OCI-LY7 (cell line): ENCODE measurements at regions of chr1 and their contacts with region 1.

Region 1: DNA sequence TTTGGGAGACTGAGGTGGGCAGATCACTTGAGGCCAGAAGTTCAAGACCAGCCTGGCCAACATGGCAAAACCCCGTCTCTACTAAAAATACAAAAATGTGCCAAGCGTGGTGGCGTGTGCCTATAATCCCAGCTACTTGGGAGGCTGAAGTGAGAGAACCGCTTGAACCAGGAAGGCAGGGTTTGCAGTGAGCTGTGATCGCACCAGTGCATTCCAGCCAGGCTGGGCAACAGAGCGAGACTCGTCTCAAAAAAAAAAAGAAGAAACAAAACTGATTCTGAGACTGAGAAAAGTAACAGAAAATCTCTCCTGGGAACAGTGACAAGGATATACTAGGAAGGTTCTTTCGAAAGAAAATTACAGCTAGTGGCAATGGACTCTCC is 20.9 kb downstream of the USP48 start:
- DNase-seq: peak; percentile 64
- H3K4me3 ChIP-seq: peak overlapping the region; percentile 25
- H3K27ac ChIP-seq: peak overlapping the region; percentile 74
- H3K4me1 ChIP-seq: peaks cover 64% of the 10 kb centered on the region
- CTCF ChIP-seq: no peak

Region 2: GRCh38 chr1:21614419-21615115 is 147.4 kb before region 1 on chr1:
- CTCF ChIA-PET with region 1: no interaction called
- POLR2A ChIA-PET with region 1: no interaction called
- intact Hi-C with region 1: no loop called
- DNase-seq: no peak
- H3K4me3 ChIP-seq: no peak overlapping the region
- H3K27ac ChIP-seq: no peak overlapping the region
- H3K4me1 ChIP-seq: no peaks in the 10 kb centered on the region
- CTCF ChIP-seq: no peak

Region 3: DNA sequence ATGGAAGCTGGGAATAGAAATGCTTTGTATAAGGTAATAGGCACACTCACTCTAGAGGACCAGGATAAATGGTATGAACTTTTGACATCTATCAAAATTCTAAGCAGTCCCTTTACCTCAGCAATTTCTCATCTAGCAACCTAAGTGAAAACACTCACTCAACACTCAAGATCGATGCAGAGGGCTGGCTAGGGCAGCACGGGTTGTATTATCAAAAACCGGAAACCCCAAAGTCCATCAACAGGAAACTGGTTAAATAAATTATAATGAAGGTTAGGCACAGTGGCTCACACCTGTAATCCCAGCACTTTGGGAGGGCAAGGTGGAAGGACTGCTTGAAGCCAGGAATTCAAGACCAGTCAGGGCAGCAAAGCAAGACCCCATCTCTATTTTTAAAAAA is 11.6 kb after region 1 on chr1:
- CTCF ChIA-PET with region 1: no interaction called
- POLR2A ChIA-PET with region 1: interaction called, 11 read pairs
- intact Hi-C with region 1: no loop called
- DNase-seq: peak; percentile 37
- H3K4me3 ChIP-seq: no peak overlapping the region
- H3K27ac ChIP-seq: peak overlapping the region; percentile 28
- H3K4me1 ChIP-seq: peaks cover 21% of the 10 kb centered on the region
- CTCF ChIP-seq: no peak

Region 4: GRCh38 chr1:21782868-21783678 is 21.1 kb after region 1 on chr1 and contains the start of gene USP48:
- CTCF ChIA-PET with region 1: no interaction called
- POLR2A ChIA-PET with region 1: interaction called, 6 read pairs
- intact Hi-C with region 1: loop called (anchors 2 kb)
- DNase-seq: peak; percentile 99
- H3K4me3 ChIP-seq: peak within 1 kb of the TSS; percentile 85
- H3K27ac ChIP-seq: peak within 1 kb of the TSS; percentile 94
- H3K4me1 ChIP-seq: peaks cover 21% of the 10 kb centered on the region
- CTCF ChIP-seq: no peak; the same call in 1 of the 2 replicates
- total RNA-seq, gene USP48: 45.0 and 56.0 TPM in 2 replicates

Region 5: GRCh38 chr1:21811875-21812305 is 49.9 kb after region 1 on chr1 and contains the start of gene LDLRAD2:
- CTCF ChIA-PET with region 1: no interaction called
- POLR2A ChIA-PET with region 1: no interaction called
- intact Hi-C with region 1: no loop called
- DNase-seq: no peak
- H3K4me3 ChIP-seq: no peak within 1 kb of the TSS
- H3K27ac ChIP-seq: no peak within 1 kb of the TSS
- H3K4me1 ChIP-seq: no peaks in the 10 kb centered on the region
- CTCF ChIP-seq: no peak
- total RNA-seq, gene LDLRAD2: not detected in 2 replicates

Region 6: GRCh38 chr1:21852282-21853128 is 90.5 kb after region 1 on chr1:
- CTCF ChIA-PET with region 1: no interaction called
- POLR2A ChIA-PET with region 1: no interaction called
- intact Hi-C with region 1: no loop called
- DNase-seq: peak; percentile 63
- H3K4me3 ChIP-seq: no peak overlapping the region
- H3K27ac ChIP-seq: no peak overlapping the region
- H3K4me1 ChIP-seq: peaks cover 10% of the 10 kb centered on the region
- CTCF ChIP-seq: no peak